ENCODE measurements at regions of chr20 and their contacts with region 1.

Region 1: GRCh38 chr20:44210422-44211176 is at the start of gene OSER1:
- DNase-seq: peak; percentile 97 to 99
- ATAC-seq: peak; percentile 81
- total RNA-seq, gene OSER1: 21.9 to 35.2 TPM

Region 2: GRCh38 chr20:44388466-44389023 is 177.9 kb after region 1 on chr20:
- intact Hi-C with region 1: loop called in 1 of 2 experiments (anchors 10 kb)
- DNase-seq: peak; percentile 76 to 87
- ATAC-seq: peak; percentile 65

Region 3: GRCh38 chr20:44460795-44461141 is 250.2 kb after region 1 on chr20:
- intact Hi-C with region 1: loop called in 1 of 2 experiments (anchors 10 kb)
- DNase-seq: no peak
- ATAC-seq: peak; percentile 67

Measured in left colon (tissue), 2 donors.